ENCODE measurements at regions of chr1 and their contacts with region 1.

Region 1: GRCh38 chr1:247487057-247487456 is 29.2 kb upstream of the OR2B11 start:
- DNase-seq: no peak
- ATAC-seq: no peak
- H3K4me3 ChIP-seq: no peak overlapping the region
- H3K27ac ChIP-seq: no peak overlapping the region
- H3K4me1 ChIP-seq: no peaks in the 10 kb centered on the region
- H3K27me3 ChIP-seq: peaks cover 0 to 3% (median 0%) of the 10 kb centered on the region in 3 donors
- CTCF ChIP-seq: peak in 1 of 5 experiments; percentile 32
- POLR2A ChIP-seq: no peak

Region 2: DNA sequence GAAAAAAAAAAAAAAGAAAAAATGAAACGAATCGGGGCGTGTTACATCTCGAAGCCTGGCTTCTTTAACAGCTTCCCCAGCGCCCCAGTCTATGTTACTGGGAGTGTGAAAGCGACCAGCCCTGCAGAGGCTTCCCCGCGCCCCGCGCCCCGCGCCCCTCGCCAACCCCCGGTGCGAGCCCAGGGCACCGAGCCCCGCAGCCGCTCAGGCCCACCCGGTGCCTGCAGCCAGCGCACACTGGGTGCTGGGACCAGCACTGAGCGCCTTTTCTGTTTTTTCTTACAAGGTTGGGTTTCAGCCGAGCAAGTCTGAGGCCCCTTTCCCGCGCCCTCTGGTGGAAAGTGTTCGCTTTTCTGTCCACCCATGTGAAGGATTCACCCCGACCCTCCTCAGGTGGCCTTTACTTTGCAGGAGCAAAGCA is 113.3 kb before region 1 on chr1:
- in situ Hi-C with region 1: loop called in 1 of 4 experiments (anchors 10 kb)
- intact Hi-C with region 1: no loop called
- DNase-seq: no peak
- ATAC-seq: no peak
- H3K4me3 ChIP-seq: peak overlapping the region in 1 of 4 donors; percentile 53
- H3K27ac ChIP-seq: no peak overlapping the region
- H3K4me1 ChIP-seq: peaks cover 0 to 3% of the 10 kb centered on the region in 2 donors
- H3K27me3 ChIP-seq: peaks cover 0 to 10% (median 0%) of the 10 kb centered on the region in 3 donors
- CTCF ChIP-seq: peak in 2 of 5 experiments; percentile 30 to 39
- POLR2A ChIP-seq: no peak

Region 3: GRCh38 chr1:247390116-247390791 is 96.8 kb before region 1 on chr1:
- in situ Hi-C with region 1: no loop called
- intact Hi-C with region 1: loop called (anchors 10 kb)
- DNase-seq: peak; percentile 26 to 46
- ATAC-seq: peak; percentile 80 to 81
- H3K4me3 ChIP-seq: peak overlapping the region in 2 of 4 donors; percentile 29 to 34
- H3K27ac ChIP-seq: no peak overlapping the region
- H3K4me1 ChIP-seq: no peaks in the 10 kb centered on the region
- H3K27me3 ChIP-seq: no peaks in the 10 kb centered on the region
- CTCF ChIP-seq: peak; percentile 20 to 72 (median 50)
- POLR2A ChIP-seq: no peak

Region 4: GRCh38 chr1:247627951-247628350 is 140.9 kb after region 1 on chr1:
- in situ Hi-C with region 1: no loop called
- intact Hi-C with region 1: no loop called
- DNase-seq: no peak
- ATAC-seq: no peak
- H3K4me3 ChIP-seq: no peak overlapping the region
- H3K27ac ChIP-seq: no peak overlapping the region
- H3K4me1 ChIP-seq: no peaks in the 10 kb centered on the region
- H3K27me3 ChIP-seq: no peaks in the 10 kb centered on the region
- CTCF ChIP-seq: no peak
- POLR2A ChIP-seq: no peak